ENCODE measurements at regions of chr13 and their contacts with region 1.

Region 1: GRCh38 chr13:73938375-73939070 is 195.7 kb downstream of the KLF12 start:
- DNase-seq: no peak
- ATAC-seq: no peak

Region 2: DNA sequence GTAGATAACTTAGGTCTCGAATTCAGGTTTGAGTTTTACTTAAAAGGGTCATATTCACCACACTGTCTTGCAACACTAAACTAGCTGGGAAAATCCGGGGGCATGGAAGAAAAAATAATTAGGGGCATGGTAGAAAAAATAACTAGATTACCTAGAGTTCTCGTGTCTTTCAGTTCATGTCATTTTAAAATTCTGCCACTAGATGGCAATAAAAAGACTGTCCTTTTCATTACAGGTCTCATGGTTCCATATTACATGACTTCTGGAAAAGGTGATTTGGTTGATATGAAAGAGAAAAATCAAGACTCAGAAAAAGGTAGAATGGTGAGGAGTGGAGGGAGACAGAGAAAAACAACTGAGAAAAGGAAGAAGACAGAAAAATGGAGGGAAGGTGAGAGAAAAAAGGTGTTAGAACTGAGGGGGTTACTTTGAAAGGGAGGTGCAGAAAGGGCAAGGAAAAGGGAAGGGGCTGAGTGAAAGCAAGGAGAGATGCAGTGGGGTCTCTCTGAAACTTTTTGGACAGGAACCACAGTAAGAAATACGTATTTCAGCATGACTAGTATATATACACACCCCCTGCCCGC is 103.3 kb before region 1 on chr13:
- intact Hi-C with region 1: no loop called
- DNase-seq: no peak
- ATAC-seq: no peak

Region 3: GRCh38 chr13:73984949-73985691 is 46.6 kb after region 1 on chr13:
- intact Hi-C with region 1: loop called in 1 of 2 experiments (anchors 5 kb)
- DNase-seq: peak; percentile 56
- ATAC-seq: peak in 1 of 2 donors; percentile 54

Region 4: GRCh38 chr13:74133657-74134201 is 195.2 kb after region 1 on chr13:
- intact Hi-C with region 1: no loop called
- DNase-seq: peak; percentile 88
- ATAC-seq: peak; percentile 63 to 74

Measured in left cardiac atrium (tissue), 4 donors.